ENCODE measurements at regions of chr10 and their contacts with region 1.

Region 1: DNA sequence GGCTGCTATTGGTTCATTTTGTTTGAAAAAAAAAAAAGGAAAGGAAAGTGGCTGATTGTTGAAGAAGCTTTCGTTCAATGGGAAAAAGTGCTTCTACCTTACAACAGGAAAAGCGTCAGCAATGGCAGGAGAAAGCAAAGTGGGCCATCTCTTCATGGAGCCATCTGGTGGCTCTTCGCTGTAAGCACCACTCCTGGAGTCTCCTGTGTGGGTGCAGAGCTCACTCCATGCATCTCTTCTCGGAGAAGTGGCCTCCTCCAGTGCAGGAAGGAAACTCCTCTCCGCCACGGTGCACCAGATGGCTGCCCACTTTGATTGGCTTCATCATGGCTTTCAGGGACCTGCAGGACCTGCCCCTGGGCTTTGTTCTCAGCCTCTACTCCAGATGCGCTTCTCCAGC is 250.9 kb downstream of the PTEN start:
- DNase-seq: peak; percentile 28 to 69 (median 62)
- ATAC-seq: peak; percentile 74 to 79
- H3K4me3 ChIP-seq: no peak overlapping the region
- H3K27ac ChIP-seq: no peak overlapping the region
- H3K4me1 ChIP-seq: no peaks in the 10 kb centered on the region
- H3K27me3 ChIP-seq: no peaks in the 10 kb centered on the region

Region 2: DNA sequence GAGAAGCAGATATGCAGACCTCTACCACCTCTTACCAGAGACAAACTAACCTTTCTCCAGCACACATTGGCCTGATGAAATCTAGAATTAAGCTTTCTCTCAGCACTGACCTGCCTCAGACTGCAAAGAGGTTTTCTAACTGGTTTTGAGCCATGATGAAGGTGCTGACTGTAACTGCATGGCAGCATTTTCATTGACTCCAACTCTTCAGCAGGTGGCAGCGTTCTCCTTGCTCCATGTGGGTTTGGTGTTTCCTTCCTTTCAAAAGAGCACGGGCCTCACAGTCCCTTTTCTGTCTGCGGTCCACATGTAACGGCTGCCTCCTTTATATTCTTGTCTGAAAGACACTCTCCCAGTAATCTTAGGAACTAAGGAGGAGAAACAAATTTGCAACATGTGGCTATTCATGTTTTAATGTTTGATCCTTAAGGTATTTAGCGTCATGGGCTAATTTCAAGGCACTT is 263.6 kb before region 1 on chr10:
- intact Hi-C with region 1: loop called in 2 of 4 experiments (anchors 5 to 10 kb)
- DNase-seq: peak; percentile 45 to 67 (median 65)
- ATAC-seq: peak; percentile 93
- H3K4me3 ChIP-seq: no peak overlapping the region
- H3K27ac ChIP-seq: no peak overlapping the region
- H3K4me1 ChIP-seq: no peaks in the 10 kb centered on the region
- H3K27me3 ChIP-seq: no peaks in the 10 kb centered on the region

Region 3: GRCh38 chr10:88165849-88166271 is 51.5 kb after region 1 on chr10:
- intact Hi-C with region 1: no loop called
- DNase-seq: no peak
- ATAC-seq: no peak
- H3K4me3 ChIP-seq: no peak overlapping the region
- H3K27ac ChIP-seq: no peak overlapping the region
- H3K4me1 ChIP-seq: peaks cover 3% of the 10 kb centered on the region
- H3K27me3 ChIP-seq: no peaks in the 10 kb centered on the region